Motor neuron (in vitro differentiated cells): ENCODE measurements at regions of chr5 and their contacts with region 1.

Region 1: GRCh38 chr5:120457839-120458507 is 6.1 kb upstream of the PRR16 start:
- ATAC-seq: peak in 2 of 8 experiments; percentile 41 to 86
- H3K4me3 ChIP-seq: no peak overlapping the region
- H3K27ac ChIP-seq: no peak overlapping the region
- H3K4me1 ChIP-seq: peaks cover 3 to 11% of the 10 kb centered on the region in 2 donors

Region 2: GRCh38 chr5:119943148-119943547 is 514.8 kb before region 1 on chr5:
- in situ Hi-C with region 1: loop called in 1 of 9 experiments (anchors 25 kb)
- ATAC-seq: peak in 1 of 8 experiments; percentile 56
- H3K4me3 ChIP-seq: no peak overlapping the region
- H3K27ac ChIP-seq: no peak overlapping the region
- H3K4me1 ChIP-seq: no peaks in the 10 kb centered on the region

Region 3: GRCh38 chr5:120055858-120056257 is 402.1 kb before region 1 on chr5:
- in situ Hi-C with region 1: loop called in 2 of 9 experiments (anchors 10 to 25 kb)
- ATAC-seq: peak in 4 of 8 experiments; percentile 52 to 93 (median 76)
- H3K4me3 ChIP-seq: no peak overlapping the region
- H3K27ac ChIP-seq: no peak overlapping the region
- H3K4me1 ChIP-seq: no peaks in the 10 kb centered on the region

Region 4: GRCh38 chr5:120174089-120174488 is 283.9 kb before region 1 on chr5:
- in situ Hi-C with region 1: no loop called
- ATAC-seq: no peak
- H3K4me3 ChIP-seq: no peak overlapping the region
- H3K27ac ChIP-seq: no peak overlapping the region
- H3K4me1 ChIP-seq: no peaks in the 10 kb centered on the region